Sigmoid colon (tissue), 7 donors: ENCODE measurements at regions of chr2 and their contacts with region 1.

Region 1: GRCh38 chr2:61512768-61513398 is 25.3 kb downstream of the XPO1 start:
- DNase-seq: no peak
- H3K4me3 ChIP-seq: no peak overlapping the region
- H3K27ac ChIP-seq: no peak overlapping the region
- H3K4me1 ChIP-seq: peaks cover 0 to 6% (median 2%) of the 10 kb centered on the region in 4 donors
- H3K27me3 ChIP-seq: no peaks in the 10 kb centered on the region
- CTCF ChIP-seq: no peak
- EP300 ChIP-seq: no peak
- POLR2A ChIP-seq: no peak

Region 2: DNA sequence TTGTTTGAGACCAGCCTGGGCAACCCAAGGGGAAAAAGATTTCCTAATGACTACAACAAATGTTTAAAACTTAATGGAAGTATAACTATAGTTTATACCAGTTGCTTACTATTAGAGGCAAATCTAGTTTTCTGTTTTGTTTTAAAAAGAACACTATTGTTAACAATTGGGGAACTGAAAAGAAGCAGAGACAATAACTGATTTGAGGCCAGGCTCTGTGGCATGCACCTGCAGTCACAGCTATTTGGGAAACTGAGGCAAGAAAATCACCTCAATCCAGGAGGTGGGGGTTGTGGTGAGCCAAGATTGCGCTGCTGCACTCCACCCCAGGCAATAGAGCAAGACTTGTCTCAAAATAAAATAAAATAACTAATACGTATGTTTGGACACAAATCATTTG is 13.8 kb before region 1 on chr2:
- intact Hi-C with region 1: loop called (anchors 1 kb)
- DNase-seq: no peak
- H3K4me3 ChIP-seq: no peak overlapping the region
- H3K27ac ChIP-seq: no peak overlapping the region
- H3K4me1 ChIP-seq: no peaks in the 10 kb centered on the region
- H3K27me3 ChIP-seq: no peaks in the 10 kb centered on the region
- CTCF ChIP-seq: no peak
- EP300 ChIP-seq: no peak
- POLR2A ChIP-seq: no peak